ENCODE measurements at regions of chr14 and their contacts with region 1.

Region 1: DNA sequence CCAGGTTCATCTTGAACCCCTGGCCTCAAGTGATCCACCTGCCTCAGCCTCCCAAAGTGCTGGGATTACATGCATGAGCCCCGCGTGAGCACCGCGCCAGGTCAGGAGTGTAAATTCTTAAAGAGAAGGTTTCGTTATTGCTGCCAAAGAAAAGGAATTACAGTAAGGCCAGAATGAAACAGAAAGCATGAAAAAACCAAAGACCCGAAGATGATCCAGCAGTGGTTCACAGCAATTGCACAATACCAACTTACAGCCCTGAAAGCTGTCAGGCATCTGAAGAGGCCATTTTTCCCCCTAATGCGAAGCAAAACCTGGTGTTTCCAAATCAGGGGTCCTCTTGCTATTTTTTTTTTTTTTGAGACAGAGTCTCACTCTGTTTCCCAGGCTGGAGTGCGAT is 10.3 kb downstream of the RBM23 start:
- DNase-seq: no peak
- H3K27ac ChIP-seq: peak overlapping the region; percentile 24; the same call in 1 of the 2 replicates
- CTCF ChIP-seq: no peak

Region 2: DNA sequence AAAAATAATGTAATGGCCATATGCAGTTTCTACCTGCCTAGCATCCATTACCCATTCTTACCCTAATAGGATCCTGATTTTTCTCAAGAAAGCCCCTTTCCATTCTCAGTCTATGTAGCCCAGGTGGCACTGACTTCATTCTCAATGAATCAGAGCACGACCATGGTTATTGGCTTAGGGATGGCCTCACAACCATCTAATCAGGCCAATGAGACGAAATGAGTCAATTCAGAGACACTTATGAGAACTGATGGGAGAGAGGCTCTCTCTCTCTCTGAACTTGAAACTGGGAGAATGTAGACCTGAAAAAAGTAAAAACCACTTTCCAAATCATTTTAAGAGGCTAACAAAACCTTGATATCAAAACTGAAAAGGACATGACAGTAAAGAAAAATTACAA is 187.4 kb before region 1 on chr14:
- CTCF ChIA-PET with region 1: no interaction called
- POLR2A ChIA-PET with region 1: no interaction called
- DNase-seq: no peak
- H3K27ac ChIP-seq: no peak overlapping the region
- CTCF ChIP-seq: no peak

Region 3: GRCh38 chr14:22955702-22956569 is 47.3 kb after region 1 on chr14:
- CTCF ChIA-PET with region 1: no interaction called
- POLR2A ChIA-PET with region 1: interaction called, 10 read pairs
- DNase-seq: no peak
- H3K27ac ChIP-seq: peak overlapping the region; percentile 98
- CTCF ChIP-seq: no peak

Measured in RWPE1 (cell line).